ENCODE measurements at regions of chr21 and their contacts with region 1.

Region 1: GRCh38 chr21:14382835-14383594 is at the start of gene HSPA13:
- H3K4me3 Mint-ChIP-seq: peak within 1 kb of the TSS; percentile 100
- H3K27ac Mint-ChIP-seq: peak within 1 kb of the TSS; percentile 97
- H3K4me1 Mint-ChIP-seq: peaks cover 21% of the 10 kb centered on the region
- H3K27me3 Mint-ChIP-seq: no peaks in the 10 kb centered on the region

Region 2: GRCh38 chr21:15729674-15730483 is 1346.9 kb after region 1 on chr21 and contains the start of gene USP25:
- intact Hi-C with region 1: loop called (anchors 10 kb)
- H3K4me3 Mint-ChIP-seq: peak within 1 kb of the TSS; percentile 83
- H3K27ac Mint-ChIP-seq: peak within 1 kb of the TSS; percentile 87
- H3K4me1 Mint-ChIP-seq: peaks cover 6% of the 10 kb centered on the region
- H3K27me3 Mint-ChIP-seq: no peaks in the 10 kb centered on the region